Sigmoid colon (tissue), 7 donors: ENCODE measurements at regions of chr12 and their contacts with region 1.

Region 1: GRCh38 chr12:117151195-117152031 is 38.9 kb downstream of the FBXO21 start:
- DNase-seq: peak; percentile 80
- H3K4me3 ChIP-seq: no peak overlapping the region
- H3K27ac ChIP-seq: no peak overlapping the region
- H3K4me1 ChIP-seq: no peaks in the 10 kb centered on the region
- H3K27me3 ChIP-seq: no peaks in the 10 kb centered on the region
- CTCF ChIP-seq: peak; percentile 21 to 50 (median 28)
- EP300 ChIP-seq: no peak
- POLR2A ChIP-seq: no peak

Region 2: GRCh38 chr12:116880817-116881324 is 270.5 kb before region 1 on chr12:
- intact Hi-C with region 1: no loop called
- DNase-seq: no peak
- H3K4me3 ChIP-seq: peak overlapping the region in 3 of 4 donors; percentile 22 to 40 (median 38)
- H3K27ac ChIP-seq: no peak overlapping the region
- H3K4me1 ChIP-seq: peaks cover 0 to 42% (median 37%) of the 10 kb centered on the region in 4 donors
- H3K27me3 ChIP-seq: peaks cover 44 to 93% (median 83%) of the 10 kb centered on the region in 3 donors
- CTCF ChIP-seq: no peak
- EP300 ChIP-seq: no peak
- POLR2A ChIP-seq: no peak

Region 3: DNA sequence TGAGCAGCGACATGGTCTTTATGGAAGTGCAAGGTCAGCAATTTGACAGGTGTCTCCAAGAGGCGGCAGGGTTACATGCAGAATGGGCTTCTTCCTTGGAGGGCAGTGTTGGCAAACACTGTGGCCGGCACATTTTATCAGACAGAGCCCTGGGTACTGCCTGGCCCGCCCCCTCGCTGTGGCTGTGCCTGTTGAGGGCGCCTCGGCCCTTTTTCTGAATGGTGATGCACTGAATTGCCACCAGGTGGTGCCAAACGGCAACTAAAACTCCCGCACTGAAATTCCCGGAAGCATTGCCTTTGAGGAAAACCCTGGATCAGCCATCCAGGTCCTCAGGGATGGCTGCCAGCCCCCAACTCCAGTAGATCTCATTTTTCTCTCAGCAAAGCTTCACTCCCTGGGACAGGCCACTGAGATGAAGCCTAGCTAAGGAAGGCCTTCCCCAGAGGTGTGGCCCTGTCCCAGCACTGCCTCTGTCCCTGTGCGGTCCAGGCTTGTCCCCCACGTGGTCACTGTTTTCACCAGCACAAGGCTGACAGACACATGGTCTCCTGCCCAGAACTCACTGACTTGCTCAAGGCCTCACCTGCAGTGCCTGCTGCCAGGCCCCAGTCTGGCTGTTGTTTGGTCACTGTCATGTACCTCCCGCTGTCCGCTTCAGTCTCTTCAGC is 125.8 kb before region 1 on chr12:
- intact Hi-C with region 1: loop called (anchors 2 kb)
- DNase-seq: peak; percentile 84
- H3K4me3 ChIP-seq: no peak overlapping the region
- H3K27ac ChIP-seq: no peak overlapping the region
- H3K4me1 ChIP-seq: peaks cover 0 to 8% (median 2%) of the 10 kb centered on the region in 4 donors
- H3K27me3 ChIP-seq: no peaks in the 10 kb centered on the region
- CTCF ChIP-seq: peak; percentile 75 to 87 (median 85)
- EP300 ChIP-seq: no peak
- POLR2A ChIP-seq: no peak

Region 4: GRCh38 chr12:117486840-117487659 is 335.6 kb after region 1 on chr12:
- intact Hi-C with region 1: no loop called
- DNase-seq: no peak
- H3K4me3 ChIP-seq: no peak overlapping the region
- H3K27ac ChIP-seq: no peak overlapping the region
- H3K4me1 ChIP-seq: no peaks in the 10 kb centered on the region
- H3K27me3 ChIP-seq: no peaks in the 10 kb centered on the region
- CTCF ChIP-seq: no peak
- EP300 ChIP-seq: no peak
- POLR2A ChIP-seq: no peak